ENCODE measurements at regions of chr22 and their contacts with region 1.

Region 1: DNA sequence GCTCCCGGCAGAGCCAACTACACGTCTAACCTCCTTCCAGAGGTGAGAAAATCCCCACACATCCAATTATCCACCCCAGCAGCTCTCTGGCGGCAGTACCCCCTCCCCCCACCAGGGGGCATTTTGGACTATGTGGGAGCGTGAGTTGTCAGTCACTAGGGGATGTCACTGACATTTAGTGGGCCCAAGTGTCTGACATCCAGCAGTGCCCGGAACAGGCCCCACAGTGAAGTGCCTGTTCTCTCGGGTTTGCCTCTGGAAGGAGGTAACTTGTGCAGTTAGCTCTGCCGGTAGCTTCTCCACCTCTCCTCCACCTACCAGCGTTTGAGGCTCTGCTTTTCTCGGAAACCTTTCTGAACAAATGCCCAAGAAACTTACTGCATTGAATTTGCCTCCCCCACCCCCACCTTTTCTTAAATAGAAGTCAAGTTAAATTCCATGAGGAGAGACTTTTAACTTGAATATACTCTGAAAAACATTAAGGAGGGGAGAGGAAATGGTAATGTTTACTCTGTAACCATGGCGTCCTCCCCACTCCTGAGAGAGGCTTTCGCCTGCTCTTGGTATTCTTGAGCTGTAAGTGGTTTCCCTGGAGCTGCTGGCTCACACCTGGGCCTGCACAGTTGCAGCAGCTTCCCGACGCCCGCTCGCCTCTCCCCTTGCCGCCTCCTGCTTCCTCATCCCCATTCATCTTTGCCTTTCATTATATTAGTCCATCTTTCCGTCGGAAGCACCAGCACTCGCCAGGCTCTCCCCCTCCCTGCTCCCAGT is 112.8 kb downstream of the WNT7B start:
- DNase-seq: peak; percentile 87
- ATAC-seq: peak; percentile 81
- H3K4me3 ChIP-seq: no peak overlapping the region
- H3K27ac ChIP-seq: peak overlapping the region; percentile 70
- H3K4me1 ChIP-seq: peaks cover 21% of the 10 kb centered on the region
- H3K27me3 ChIP-seq: peaks cover 27% of the 10 kb centered on the region
- CTCF ChIP-seq: peak; percentile 93

Region 2: DNA sequence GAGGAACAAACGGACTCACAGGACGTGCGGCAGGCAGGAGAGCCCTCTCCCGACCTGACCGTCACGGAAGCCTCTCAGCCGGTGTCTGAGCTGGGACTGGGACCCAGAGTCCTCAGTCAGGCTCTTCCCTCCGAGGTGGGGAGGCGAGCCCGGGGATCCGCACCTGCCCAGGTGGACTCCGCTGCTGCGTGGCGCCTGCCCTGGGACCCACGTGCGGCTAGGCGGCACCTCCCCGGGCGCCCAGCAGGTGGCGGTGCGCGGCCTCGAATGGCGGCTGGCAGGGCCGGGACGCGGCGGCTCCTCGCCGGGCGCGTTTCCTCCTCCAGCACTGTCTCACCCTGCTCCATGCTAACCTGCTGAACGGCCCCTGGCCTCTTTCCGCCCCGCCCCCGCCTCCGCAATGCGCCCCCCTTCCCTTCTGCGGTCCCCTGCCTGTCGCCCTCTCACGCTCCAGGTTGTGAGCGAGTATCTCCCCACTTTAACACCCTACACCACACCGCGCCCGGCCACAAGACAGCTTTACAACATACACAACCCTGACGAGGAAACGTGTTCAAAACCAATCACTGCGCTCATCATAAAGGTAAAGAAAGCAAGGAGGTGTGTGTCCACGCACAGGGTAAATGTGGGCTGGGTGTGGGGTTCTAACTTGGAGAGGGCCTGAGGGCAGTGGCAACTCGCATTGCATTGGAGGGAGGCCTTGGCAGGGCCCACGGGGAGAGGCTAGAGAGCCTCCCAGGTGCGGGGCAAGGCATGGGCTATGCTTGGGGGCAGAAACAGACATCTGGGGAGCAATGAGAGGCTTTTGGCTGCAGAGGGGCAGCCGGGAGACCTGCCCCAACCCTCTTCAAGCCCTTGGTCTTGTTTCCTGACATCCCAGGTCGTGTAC is 218.4 kb before region 1 on chr22:
- intact Hi-C with region 1: loop called (anchors 10 kb)
- DNase-seq: peak; percentile 89
- ATAC-seq: peak; percentile 97
- H3K4me3 ChIP-seq: no peak overlapping the region
- H3K27ac ChIP-seq: no peak overlapping the region
- H3K4me1 ChIP-seq: no peaks in the 10 kb centered on the region
- H3K27me3 ChIP-seq: peaks cover 7% of the 10 kb centered on the region
- CTCF ChIP-seq: peak; percentile 97

Region 3: DNA sequence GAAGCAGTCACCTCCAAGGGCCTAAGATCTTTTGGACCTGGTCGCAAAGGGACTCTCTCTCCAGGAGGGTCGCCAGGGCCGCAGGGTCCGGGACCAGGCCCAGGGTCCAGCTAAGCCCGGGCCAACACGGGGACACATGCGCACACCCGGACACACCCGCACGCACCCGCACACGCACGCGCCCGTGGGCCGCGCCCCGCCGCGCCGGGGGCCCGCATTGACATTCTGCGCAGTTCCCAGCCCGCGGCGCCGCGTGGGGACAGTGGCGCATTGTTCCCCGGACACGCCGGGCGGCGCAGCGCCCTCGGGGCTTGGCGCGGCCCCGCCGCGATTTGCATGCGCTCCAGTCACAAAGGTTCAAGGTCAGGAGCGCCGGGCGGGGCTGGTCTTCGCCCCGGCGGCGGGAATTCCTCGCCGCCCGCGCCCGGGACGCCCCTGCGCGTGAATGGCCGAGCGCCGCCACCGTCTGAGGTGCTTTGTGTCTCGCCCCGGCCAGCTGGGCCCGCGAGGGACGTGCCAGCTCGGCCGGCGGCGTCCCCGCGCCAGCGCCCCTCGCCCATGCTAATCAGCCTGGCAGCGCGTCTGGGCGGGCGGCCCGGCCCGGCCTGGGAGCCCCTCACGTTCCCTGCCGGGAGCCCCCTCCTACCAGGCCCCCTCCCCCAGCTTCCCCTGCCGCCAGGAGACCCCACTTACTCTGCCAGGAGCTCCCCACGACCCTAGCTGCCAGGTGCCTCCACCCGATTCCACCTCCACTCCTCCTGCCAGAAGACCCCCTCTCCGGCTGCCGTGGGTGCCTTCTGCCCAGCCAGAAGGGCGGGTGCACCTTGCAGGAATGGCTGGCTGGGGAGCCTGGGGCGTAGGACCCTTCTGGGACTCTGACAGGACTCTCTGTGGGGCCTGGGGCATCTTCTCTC is 163.3 kb after region 1 on chr22:
- intact Hi-C with region 1: no loop called
- DNase-seq: peak; percentile 87
- ATAC-seq: peak; percentile 86
- H3K4me3 ChIP-seq: peak overlapping the region; percentile 52
- H3K27ac ChIP-seq: peak overlapping the region; percentile 61
- H3K4me1 ChIP-seq: peaks cover 9% of the 10 kb centered on the region
- H3K27me3 ChIP-seq: no peaks in the 10 kb centered on the region
- CTCF ChIP-seq: peak; percentile 19

Measured in upper lobe of right lung (tissue), 1 donor.